ENCODE measurements at regions of chr13 and their contacts with region 1.

Region 1: GRCh38 chr13:80979035-80979641 is 638.2 kb upstream of the SPRY2 start:
- DNase-seq: peak; percentile 53
- ATAC-seq: peak; percentile 53
- H3K4me3 Mint-ChIP-seq: no peak overlapping the region
- H3K27ac Mint-ChIP-seq: no peak overlapping the region
- H3K4me1 Mint-ChIP-seq: no peaks in the 10 kb centered on the region
- H3K27me3 Mint-ChIP-seq: no peaks in the 10 kb centered on the region
- CTCF ChIP-seq: peak; percentile 87

Region 2: GRCh38 chr13:81017513-81018152 is 38.5 kb after region 1 on chr13:
- CTCF ChIA-PET with region 1: interaction called, 13 read pairs
- POLR2A ChIA-PET with region 1: no interaction called
- intact Hi-C with region 1: no loop called
- DNase-seq: no peak
- ATAC-seq: no peak
- H3K4me3 Mint-ChIP-seq: no peak overlapping the region
- H3K27ac Mint-ChIP-seq: no peak overlapping the region
- H3K4me1 Mint-ChIP-seq: no peaks in the 10 kb centered on the region
- H3K27me3 Mint-ChIP-seq: no peaks in the 10 kb centered on the region
- CTCF ChIP-seq: peak; percentile 61

Region 3: DNA sequence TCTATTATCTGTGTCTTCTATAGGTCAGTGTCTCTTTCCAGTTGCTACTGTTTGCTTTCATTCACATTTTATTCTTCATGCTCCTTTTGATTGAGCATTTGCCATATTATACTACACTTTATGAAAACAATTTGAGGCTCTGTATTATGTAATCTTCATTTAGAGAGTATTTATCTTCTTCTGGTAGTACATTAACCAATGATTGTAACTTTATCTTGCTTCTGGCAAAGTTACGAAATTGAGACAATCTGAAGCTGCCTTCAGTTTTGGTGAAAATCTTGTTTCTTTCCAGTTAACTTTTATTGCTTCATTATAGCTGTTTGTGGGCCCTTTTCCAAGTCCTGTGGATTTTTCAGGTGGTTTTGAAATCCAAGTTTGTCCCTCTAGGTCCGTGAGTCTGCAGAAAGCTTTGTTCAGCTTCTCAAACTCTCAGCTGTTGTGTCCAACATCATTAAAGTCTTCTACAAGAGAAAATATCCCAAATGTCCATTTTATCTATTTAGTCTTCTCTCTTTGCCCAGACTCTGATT is 617.2 kb after region 1 on chr13:
- CTCF ChIA-PET with region 1: no interaction called
- POLR2A ChIA-PET with region 1: no interaction called
- intact Hi-C with region 1: no loop called
- DNase-seq: no peak
- ATAC-seq: no peak
- H3K4me3 Mint-ChIP-seq: no peak overlapping the region
- H3K27ac Mint-ChIP-seq: no peak overlapping the region
- H3K4me1 Mint-ChIP-seq: no peaks in the 10 kb centered on the region
- H3K27me3 Mint-ChIP-seq: no peaks in the 10 kb centered on the region
- CTCF ChIP-seq: no peak

Measured in activated CD8-positive, alpha-beta T cell treated with anti-CD3 and anti-CD28 coated beads for 36 hours (primary cell).